ENCODE measurements at regions of chr2 and their contacts with region 1.

Region 1: DNA sequence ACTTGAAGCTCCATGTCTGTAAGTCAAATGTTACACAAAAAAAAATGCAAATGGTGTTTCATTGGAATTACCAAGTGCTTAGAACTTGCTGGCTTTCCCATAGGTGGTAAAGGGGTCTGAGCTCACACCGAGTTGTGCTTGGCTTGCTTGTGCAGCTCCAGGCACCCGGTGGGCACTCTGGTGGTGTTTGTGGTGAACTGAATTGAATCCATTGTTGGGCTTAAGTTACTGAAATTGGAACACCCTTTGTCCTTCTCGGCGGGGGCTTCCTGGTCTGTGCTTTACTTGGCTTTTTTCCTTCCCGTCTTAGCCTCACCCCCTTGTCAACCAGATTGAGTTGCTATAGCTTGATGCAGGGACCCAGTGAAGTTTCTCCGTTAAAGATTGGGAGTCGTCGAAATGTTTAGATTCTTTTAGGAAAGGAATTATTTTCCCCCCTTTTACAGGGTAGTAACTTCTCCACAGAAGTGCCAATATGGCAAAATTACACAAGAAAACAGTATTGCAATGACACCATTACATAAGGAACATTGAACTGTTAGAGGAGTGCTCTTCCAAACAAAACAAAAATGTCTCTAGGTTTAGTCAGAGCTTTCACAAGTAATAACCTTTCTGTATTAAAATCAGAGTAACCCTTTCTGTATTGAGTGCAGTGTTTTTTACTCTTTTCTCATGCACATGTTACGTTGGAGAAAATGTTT is 97.9 kb upstream of the IL1R2 start:
- DNase-seq: no peak
- H3K4me3 ChIP-seq: no peak overlapping the region
- H3K27ac ChIP-seq: no peak overlapping the region
- H3K4me1 ChIP-seq: peaks cover 13% of the 10 kb centered on the region
- H3K27me3 ChIP-seq: no peaks in the 10 kb centered on the region
- CTCF ChIP-seq: no peak

Region 2: GRCh38 chr2:101949304-101949703 is 55.5 kb after region 1 on chr2:
- intact Hi-C with region 1: no loop called
- DNase-seq: no peak
- H3K4me3 ChIP-seq: no peak overlapping the region
- H3K27ac ChIP-seq: no peak overlapping the region
- H3K4me1 ChIP-seq: no peaks in the 10 kb centered on the region
- H3K27me3 ChIP-seq: peaks cover 8% of the 10 kb centered on the region
- CTCF ChIP-seq: no peak

Region 3: GRCh38 chr2:102442967-102443828 is 549.4 kb after region 1 on chr2:
- intact Hi-C with region 1: loop called (anchors 10 kb)
- DNase-seq: no peak
- H3K4me3 ChIP-seq: no peak overlapping the region
- H3K27ac ChIP-seq: no peak overlapping the region
- H3K4me1 ChIP-seq: peaks cover 5% of the 10 kb centered on the region
- H3K27me3 ChIP-seq: peaks cover 7% of the 10 kb centered on the region
- CTCF ChIP-seq: peak; percentile 71

Measured in left ventricle myocardium inferior (tissue), 1 donor.